ENCODE measurements at regions of chr14 and their contacts with region 1.

Region 1: GRCh38 chr14:61326847-61327246 is 5.5 kb downstream of the PRKCH start:
- DNase-seq: no peak
- H3K4me3 Mint-ChIP-seq: peak overlapping the region; percentile 99
- H3K27ac Mint-ChIP-seq: peak overlapping the region; percentile 93
- H3K4me1 Mint-ChIP-seq: peaks cover 64% of the 10 kb centered on the region
- H3K27me3 Mint-ChIP-seq: no peaks in the 10 kb centered on the region

Region 2: DNA sequence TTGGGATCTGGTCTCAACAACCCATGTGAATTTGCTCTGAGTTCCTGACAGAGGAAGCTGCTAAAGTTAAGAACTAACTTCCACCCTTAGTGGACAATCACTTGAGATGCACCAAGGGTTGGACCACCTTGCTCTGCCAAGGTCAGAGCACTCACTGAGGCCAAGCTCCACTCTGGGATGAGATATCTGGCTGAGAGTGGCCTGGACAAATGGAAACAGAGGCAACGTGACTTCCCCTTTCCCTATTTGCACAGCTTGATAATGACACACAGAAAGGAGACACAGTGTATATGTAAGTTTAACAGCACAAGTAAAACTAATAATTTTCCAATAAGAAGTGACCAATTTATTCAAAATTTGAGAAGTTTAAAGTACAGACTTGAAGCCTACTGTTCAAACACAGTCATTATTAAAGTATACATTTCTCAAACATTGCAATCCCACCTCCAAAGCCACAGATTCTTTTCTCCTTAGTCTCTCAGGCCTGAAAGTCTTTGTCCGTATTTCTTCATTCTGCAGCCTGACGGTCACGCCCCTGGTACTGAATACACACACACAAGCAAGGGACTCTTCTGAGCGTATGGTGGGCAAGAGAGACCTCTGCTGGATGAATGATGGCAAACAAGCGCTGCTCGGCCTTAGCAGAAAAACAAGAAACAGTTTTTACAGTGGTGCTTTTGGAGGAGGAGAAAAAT is 74.3 kb before region 1 on chr14:
- CTCF ChIA-PET with region 1: no interaction called
- POLR2A ChIA-PET with region 1: no interaction called
- intact Hi-C with region 1: no loop called
- DNase-seq: peak; percentile 76
- H3K4me3 Mint-ChIP-seq: no peak overlapping the region
- H3K27ac Mint-ChIP-seq: no peak overlapping the region
- H3K4me1 Mint-ChIP-seq: peaks cover 8% of the 10 kb centered on the region
- H3K27me3 Mint-ChIP-seq: peaks cover 9% of the 10 kb centered on the region

Region 3: DNA sequence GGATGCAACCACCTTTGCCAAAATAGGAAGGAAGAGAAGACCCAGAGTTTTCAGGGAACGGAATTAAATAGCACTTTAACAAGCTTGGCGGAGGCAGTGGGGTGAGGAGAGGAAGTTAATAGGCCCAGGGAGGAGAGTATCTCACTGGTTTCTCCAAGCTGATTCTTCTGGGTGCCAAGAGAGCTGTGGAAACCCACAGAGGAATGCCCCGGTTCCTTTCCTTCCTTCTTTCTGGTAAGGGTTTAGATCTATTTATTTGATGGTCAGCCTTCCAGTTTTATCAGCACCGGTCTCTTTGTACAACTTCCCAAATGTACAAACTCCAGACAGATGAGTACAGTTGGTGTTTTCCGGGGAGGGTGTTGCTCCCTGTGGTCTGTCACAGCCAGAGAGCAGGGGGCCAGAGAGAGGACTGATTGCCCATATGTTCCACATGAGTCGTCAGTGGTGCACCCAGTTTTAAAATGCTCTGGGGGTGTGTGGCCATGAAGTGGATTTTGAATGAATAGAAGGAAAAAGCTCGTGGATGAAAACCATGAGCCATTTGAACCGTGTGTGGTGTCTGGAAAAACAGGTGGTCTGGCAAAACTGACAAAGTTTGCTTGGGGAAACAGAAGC is 21.1 kb after region 1 on chr14:
- CTCF ChIA-PET with region 1: interaction called, 57 read pairs
- POLR2A ChIA-PET with region 1: interaction called, 216 read pairs
- intact Hi-C with region 1: no loop called
- DNase-seq: peak; percentile 67
- H3K4me3 Mint-ChIP-seq: peak overlapping the region; percentile 82
- H3K27ac Mint-ChIP-seq: peak overlapping the region; percentile 98
- H3K4me1 Mint-ChIP-seq: peaks cover 98% of the 10 kb centered on the region
- H3K27me3 Mint-ChIP-seq: no peaks in the 10 kb centered on the region

Region 4: GRCh38 chr14:61503167-61503801 is 176.4 kb after region 1 on chr14:
- CTCF ChIA-PET with region 1: no interaction called
- POLR2A ChIA-PET with region 1: no interaction called
- intact Hi-C with region 1: no loop called
- DNase-seq: peak; percentile 90
- H3K4me3 Mint-ChIP-seq: peak overlapping the region; percentile 62
- H3K27ac Mint-ChIP-seq: peak overlapping the region; percentile 98
- H3K4me1 Mint-ChIP-seq: peaks cover 98% of the 10 kb centered on the region
- H3K27me3 Mint-ChIP-seq: no peaks in the 10 kb centered on the region

Region 5: GRCh38 chr14:61872452-61872851 is 545.6 kb after region 1 on chr14:
- CTCF ChIA-PET with region 1: no interaction called
- POLR2A ChIA-PET with region 1: no interaction called
- intact Hi-C with region 1: no loop called
- DNase-seq: no peak
- H3K4me3 Mint-ChIP-seq: no peak overlapping the region
- H3K27ac Mint-ChIP-seq: no peak overlapping the region
- H3K4me1 Mint-ChIP-seq: no peaks in the 10 kb centered on the region
- H3K27me3 Mint-ChIP-seq: peaks cover 19% of the 10 kb centered on the region

Measured in activated CD4-positive, alpha-beta memory T cell treated with anti-CD3 and anti-CD28 coated beads for 36 hours (primary cell).